ENCODE measurements at regions of chr15 and their contacts with region 1.

Region 1: GRCh38 chr15:70362886-70363285 is 265.2 kb upstream of the TLE3 start:
- DNase-seq: peak; percentile 8
- ATAC-seq: peak; percentile 95
- H3K4me3 ChIP-seq: no peak overlapping the region
- H3K27ac ChIP-seq: no peak overlapping the region
- H3K4me1 ChIP-seq: peaks cover 0 to 5% of the 10 kb centered on the region in 2 experiments; a peak in 1 of 4 replicates
- H3K27me3 ChIP-seq: no peaks in the 10 kb centered on the region
- CTCF ChIP-seq: peak; percentile 40 to 73 (median 52); a peak in 5 of 6 replicates
- POLR2A ChIP-seq: no peak
- RAD21 ChIP-seq: peak; percentile 68

Region 2: DNA sequence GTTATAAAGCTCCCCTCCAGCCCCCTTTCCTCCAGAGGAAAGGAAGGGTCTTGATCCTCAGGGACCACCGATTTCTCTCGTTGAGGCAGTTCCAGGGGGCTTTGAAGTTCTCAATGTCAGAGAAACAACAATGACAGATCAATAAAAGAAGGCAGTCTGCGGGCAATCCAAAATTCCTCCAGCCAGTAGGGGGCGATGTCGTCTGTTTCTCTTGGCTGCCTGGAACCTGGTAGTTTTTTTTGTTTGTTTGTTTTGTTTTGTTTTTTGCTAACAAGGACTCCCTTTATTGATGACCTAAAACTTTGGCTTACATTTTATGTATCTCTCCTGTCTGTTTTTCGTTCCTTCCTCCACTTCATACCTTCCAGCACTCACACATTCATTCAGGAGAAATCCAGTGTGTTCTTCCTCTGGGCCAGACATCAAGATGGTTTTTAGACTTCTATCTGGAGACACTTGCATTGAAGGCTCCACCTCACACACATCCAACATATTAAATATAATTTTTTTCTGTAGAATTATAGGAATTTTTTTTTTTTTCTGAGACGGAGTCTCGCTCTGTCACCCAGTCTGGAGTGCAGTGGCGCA is 633.6 kb before region 1 on chr15:
- CTCF ChIA-PET with region 1: no interaction called
- POLR2A ChIA-PET with region 1: no interaction called
- RAD21 ChIA-PET with region 1: no interaction called
- intact Hi-C with region 1: loop called (anchors 5 kb)
- DNase-seq: peak; percentile 18
- ATAC-seq: peak; percentile 59
- H3K4me3 ChIP-seq: no peak overlapping the region
- H3K27ac ChIP-seq: no peak overlapping the region
- H3K4me1 ChIP-seq: no peaks in the 10 kb centered on the region
- H3K27me3 ChIP-seq: peaks cover 11% of the 10 kb centered on the region
- CTCF ChIP-seq: peak; percentile 42 to 94 (median 83); a peak in 5 of 6 replicates
- POLR2A ChIP-seq: no peak
- RAD21 ChIP-seq: peak; percentile 69

Region 3: GRCh38 chr15:70121624-70122297 is 241.1 kb before region 1 on chr15:
- CTCF ChIA-PET with region 1: no interaction called
- POLR2A ChIA-PET with region 1: no interaction called
- RAD21 ChIA-PET with region 1: no interaction called
- intact Hi-C with region 1: loop called (anchors 10 kb)
- DNase-seq: no peak
- ATAC-seq: peak; percentile 59; the same call in 1 of the 2 replicates
- H3K4me3 ChIP-seq: no peak overlapping the region
- H3K27ac ChIP-seq: no peak overlapping the region
- H3K4me1 ChIP-seq: no peaks in the 10 kb centered on the region
- H3K27me3 ChIP-seq: 0 out of 2 replicates have a peak, but pooled peaks cover 7% of the 10 kb centered on the region
- CTCF ChIP-seq: peak in 2 of 3 experiments; percentile 14 to 27; a peak in 1 of 6 replicates
- POLR2A ChIP-seq: no peak
- RAD21 ChIP-seq: peak; percentile 40; the same call in 1 of the 2 replicates

Region 4: DNA sequence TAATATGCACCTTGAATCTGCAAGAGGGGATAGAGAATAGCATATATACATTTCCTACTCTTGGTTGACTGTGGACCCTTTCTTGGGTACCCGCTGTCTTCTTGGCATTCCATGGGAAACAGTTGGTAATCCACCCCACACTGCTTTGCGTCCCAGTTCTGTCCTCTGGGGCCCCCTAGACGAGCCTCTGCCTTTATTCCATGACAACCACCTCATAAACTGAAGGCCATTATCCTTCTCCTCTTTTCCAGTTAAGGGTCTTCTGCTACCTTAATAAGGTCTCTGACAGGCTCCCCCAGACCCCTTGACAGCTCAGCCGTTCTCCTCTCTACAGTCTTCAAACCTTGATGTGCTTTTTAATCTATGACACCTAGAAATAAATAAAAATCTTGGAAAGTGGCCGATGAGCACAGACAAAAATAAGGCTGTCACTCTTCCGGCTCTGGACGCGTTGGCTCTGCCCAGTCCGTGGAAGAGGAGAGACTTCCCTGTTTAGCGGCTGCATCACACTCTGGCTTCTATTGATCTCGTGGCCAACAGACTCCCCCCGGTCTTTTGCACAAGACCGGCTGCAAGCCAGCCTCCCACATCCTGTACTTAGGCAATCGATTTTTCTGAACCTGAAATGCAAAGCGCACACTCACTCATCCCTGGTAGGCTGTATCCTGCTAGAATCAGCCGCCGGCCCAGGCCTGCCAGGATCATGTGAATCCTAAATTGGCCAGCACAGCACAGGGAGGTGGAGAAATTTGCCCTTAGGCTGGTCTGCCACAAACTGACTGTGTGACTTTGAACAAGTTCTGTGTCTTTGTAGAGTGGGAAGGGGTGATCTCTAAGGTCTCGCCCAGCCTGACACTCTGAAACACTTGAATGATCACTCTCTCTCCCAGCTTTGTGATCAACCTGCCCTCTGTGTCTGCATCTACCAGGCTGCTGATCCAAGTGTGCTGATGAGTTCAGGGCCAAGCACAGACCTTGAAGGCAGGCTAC is 14.0 kb before region 1 on chr15:
- CTCF ChIA-PET with region 1: no interaction called
- POLR2A ChIA-PET with region 1: no interaction called
- RAD21 ChIA-PET with region 1: no interaction called
- intact Hi-C with region 1: no loop called
- DNase-seq: no peak
- ATAC-seq: no peak
- H3K4me3 ChIP-seq: no peak overlapping the region
- H3K27ac ChIP-seq: no peak overlapping the region
- H3K4me1 ChIP-seq: no peaks in the 10 kb centered on the region
- H3K27me3 ChIP-seq: peaks cover 7% of the 10 kb centered on the region; the same call in 1 of the 2 replicates
- CTCF ChIP-seq: no peak
- POLR2A ChIP-seq: no peak
- RAD21 ChIP-seq: no peak

Measured in HCT116 (cell line).